K562 (cell line): ENCODE measurements at regions of chrX and their contacts with region 1.

Region 1: DNA sequence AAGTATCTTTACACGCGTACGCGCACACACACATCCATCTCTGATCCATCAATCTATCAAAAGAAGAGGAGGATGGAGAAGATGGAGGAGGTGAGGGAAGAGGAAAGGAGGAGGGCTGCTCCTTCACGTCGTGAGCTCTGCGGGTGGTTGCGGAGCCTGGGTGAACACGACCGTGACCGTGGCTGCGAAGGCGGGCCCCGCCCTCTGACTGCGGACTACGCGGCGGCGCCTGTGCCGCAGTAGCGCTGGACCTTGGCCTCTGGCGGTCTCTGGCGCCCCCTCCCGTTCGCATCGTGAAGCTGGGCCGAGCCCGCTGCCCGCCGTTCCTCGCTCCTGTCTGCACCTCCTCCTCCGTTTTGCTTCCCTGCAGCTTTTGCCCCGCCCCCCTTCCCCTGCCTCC is 37.7 kb upstream of the ARAF start:
- DNase-seq: peak; percentile 81 to 87 (median 83)
- ATAC-seq: peak; percentile 100
- H3K4me3 ChIP-seq: peak overlapping the region; percentile 41
- H3K27ac ChIP-seq: no peak overlapping the region
- H3K4me1 ChIP-seq: peaks cover 0 to 11% of the 10 kb centered on the region in 2 experiments; a peak in 2 of 5 replicates
- H3K27me3 ChIP-seq: peaks cover 0 to 4% of the 10 kb centered on the region in 2 experiments; a peak in 1 of 5 replicates
- CTCF ChIP-seq: peak; percentile 69 to 90 (median 86)
- EP300 ChIP-seq: no peak
- POLR2A ChIP-seq: no peak
- RAD21 ChIP-seq: peak; percentile 86 to 87

Region 2: GRCh38 chrX:47497273-47497672 is 26.0 kb before region 1 on chrX:
- CTCF ChIA-PET with region 1: interaction called, 3 read pairs
- POLR2A ChIA-PET with region 1: no interaction called
- in situ Hi-C with region 1: no loop called
- intact Hi-C with region 1: loop called (anchors 1 kb)
- DNase-seq: peak in 2 of 4 experiments; percentile 16 to 18
- ATAC-seq: 0 out of 3 replicates have a peak, but pooled peaks have one; percentile 41
- H3K4me3 ChIP-seq: no peak overlapping the region
- H3K27ac ChIP-seq: no peak overlapping the region
- H3K4me1 ChIP-seq: no peaks in the 10 kb centered on the region
- H3K27me3 ChIP-seq: no peaks in the 10 kb centered on the region
- CTCF ChIP-seq: peak; percentile 43 to 71 (median 45); a peak in 4 of 6 replicates
- EP300 ChIP-seq: no peak
- POLR2A ChIP-seq: no peak
- RAD21 ChIP-seq: peak; percentile 32 to 82; a peak in 3 of 4 replicates